Activated naive CD4-positive, alpha-beta T cell treated with anti-CD3 and anti-CD28 coated beads for 36 hours (primary cell): ENCODE measurements at regions of chrX and their contacts with region 1.

Region 1: DNA sequence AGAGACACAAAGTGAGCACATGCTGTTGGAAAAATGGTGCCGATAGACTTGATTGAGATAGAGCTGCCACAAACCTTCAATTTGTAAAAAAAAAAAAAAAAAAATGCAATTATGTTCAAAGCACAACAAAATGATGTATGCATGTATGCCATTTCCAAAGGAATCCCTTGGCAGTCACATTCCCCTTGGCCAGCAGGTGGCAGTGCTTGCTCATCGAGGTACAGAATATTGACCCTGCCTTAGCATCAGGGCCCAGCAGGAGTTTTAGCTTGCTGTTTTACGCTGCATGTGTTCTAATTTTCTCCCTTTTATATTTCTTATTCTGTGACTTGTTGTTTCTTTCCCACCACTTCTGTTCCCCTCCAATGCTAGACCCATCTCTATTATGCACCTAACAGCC is 34.5 kb upstream of the CYBB start:
- DNase-seq: peak; percentile 86
- H3K4me3 Mint-ChIP-seq: no peak overlapping the region
- H3K27ac Mint-ChIP-seq: peak overlapping the region; percentile 66
- H3K4me1 Mint-ChIP-seq: peaks cover 15% of the 10 kb centered on the region
- H3K27me3 Mint-ChIP-seq: no peaks in the 10 kb centered on the region

Region 2: GRCh38 chrX:37627602-37628001 is 117.8 kb before region 1 on chrX:
- CTCF ChIA-PET with region 1: no interaction called
- intact Hi-C with region 1: no loop called
- DNase-seq: no peak
- H3K4me3 Mint-ChIP-seq: no peak overlapping the region
- H3K27ac Mint-ChIP-seq: no peak overlapping the region
- H3K4me1 Mint-ChIP-seq: no peaks in the 10 kb centered on the region
- H3K27me3 Mint-ChIP-seq: peaks cover 3% of the 10 kb centered on the region

Region 3: GRCh38 chrX:37722595-37722994 is 22.8 kb before region 1 on chrX:
- CTCF ChIA-PET with region 1: no interaction called
- intact Hi-C with region 1: no loop called
- DNase-seq: no peak
- H3K4me3 Mint-ChIP-seq: no peak overlapping the region
- H3K27ac Mint-ChIP-seq: no peak overlapping the region
- H3K4me1 Mint-ChIP-seq: no peaks in the 10 kb centered on the region
- H3K27me3 Mint-ChIP-seq: peaks cover 3% of the 10 kb centered on the region

Region 4: GRCh38 chrX:37776283-37776986 is 31.1 kb after region 1 on chrX:
- CTCF ChIA-PET with region 1: interaction called, 3 read pairs
- intact Hi-C with region 1: loop called (anchors 2 kb)
- DNase-seq: peak; percentile 27
- H3K4me3 Mint-ChIP-seq: no peak overlapping the region
- H3K27ac Mint-ChIP-seq: no peak overlapping the region
- H3K4me1 Mint-ChIP-seq: peaks cover 20% of the 10 kb centered on the region
- H3K27me3 Mint-ChIP-seq: no peaks in the 10 kb centered on the region

Region 5: DNA sequence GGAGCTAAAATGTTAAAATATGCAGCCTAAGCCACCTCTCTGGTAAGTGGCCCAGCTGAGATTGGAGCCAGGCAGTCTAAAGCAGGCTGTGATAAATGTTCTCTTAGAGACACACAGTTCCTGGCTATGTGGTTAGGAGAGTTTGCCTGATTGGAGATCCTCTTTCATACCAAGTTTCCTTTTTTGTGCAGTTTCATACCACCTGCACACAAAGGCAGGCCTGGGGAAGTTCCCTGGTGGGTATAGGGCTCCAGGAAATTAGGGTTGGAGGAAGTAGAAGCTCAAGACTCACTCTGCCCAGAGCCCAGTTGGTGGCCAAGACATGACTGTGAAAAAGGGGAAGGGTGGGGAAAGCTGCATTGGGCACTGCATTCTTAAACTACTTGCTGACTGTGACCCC is 51.5 kb after region 1 on chrX:
- CTCF ChIA-PET with region 1: no interaction called
- intact Hi-C with region 1: loop called (anchors 2 kb)
- DNase-seq: peak; percentile 14
- H3K4me3 Mint-ChIP-seq: no peak overlapping the region
- H3K27ac Mint-ChIP-seq: no peak overlapping the region
- H3K4me1 Mint-ChIP-seq: peaks cover 18% of the 10 kb centered on the region
- H3K27me3 Mint-ChIP-seq: no peaks in the 10 kb centered on the region

Region 6: DNA sequence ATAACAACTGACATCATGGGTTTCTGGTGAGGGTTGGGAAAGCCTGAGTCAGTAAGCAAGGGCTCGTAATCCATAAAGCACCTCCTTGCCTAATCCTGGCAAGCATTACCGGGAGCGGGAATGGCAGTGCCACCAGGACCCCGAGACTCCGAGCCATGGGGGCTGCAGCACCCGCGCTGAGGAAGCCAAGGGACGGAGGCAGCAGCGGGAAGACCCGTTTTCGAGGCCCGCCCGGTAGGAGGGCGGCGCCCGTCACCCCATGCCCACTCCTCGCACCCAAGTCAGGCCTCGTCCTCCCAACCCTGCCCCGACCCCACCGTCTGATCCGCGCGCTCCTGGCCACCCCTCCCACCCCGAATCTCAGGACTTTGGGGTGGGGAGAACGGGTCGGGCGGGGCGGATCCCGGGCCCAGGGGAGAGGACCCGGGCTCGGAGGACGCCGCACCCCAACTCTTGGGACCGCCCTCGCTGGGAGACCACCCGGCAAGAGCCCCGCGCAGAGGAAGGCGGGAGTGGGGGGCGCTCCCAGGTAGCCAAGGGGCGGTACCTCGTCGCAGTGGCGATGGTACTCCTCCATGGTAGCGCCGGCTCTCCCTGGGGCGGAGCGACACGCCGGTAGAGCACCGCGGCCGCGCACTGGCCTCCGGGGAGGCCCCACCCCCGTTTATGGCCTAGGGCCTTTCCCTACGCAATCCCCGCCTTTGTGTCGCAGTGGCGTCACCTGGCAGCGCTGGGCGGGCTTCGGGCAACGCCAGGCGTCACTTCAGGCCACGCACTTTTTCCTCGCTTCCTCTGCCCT is 101.8 kb after region 1 on chrX and contains the start of gene DYNLT3:
- CTCF ChIA-PET with region 1: interaction called, 11 read pairs
- intact Hi-C with region 1: loop called (anchors 1 kb)
- DNase-seq: peak; percentile 83
- H3K4me3 Mint-ChIP-seq: peak within 1 kb of the TSS; percentile 72
- H3K27ac Mint-ChIP-seq: peak within 1 kb of the TSS; percentile 81
- H3K4me1 Mint-ChIP-seq: peaks cover 19% of the 10 kb centered on the region
- H3K27me3 Mint-ChIP-seq: no peaks in the 10 kb centered on the region
- total RNA-seq, gene DYNLT3: 11.8 to 14.4 TPM

Region 7: GRCh38 chrX:38080808-38081207 is 335.5 kb after region 1 on chrX:
- CTCF ChIA-PET with region 1: no interaction called
- intact Hi-C with region 1: no loop called
- DNase-seq: no peak
- H3K4me3 Mint-ChIP-seq: no peak overlapping the region
- H3K27ac Mint-ChIP-seq: no peak overlapping the region
- H3K4me1 Mint-ChIP-seq: no peaks in the 10 kb centered on the region
- H3K27me3 Mint-ChIP-seq: no peaks in the 10 kb centered on the region

Region 8: GRCh38 chrX:38166478-38167083 is 421.2 kb after region 1 on chrX:
- CTCF ChIA-PET with region 1: interaction called, 3 read pairs
- intact Hi-C with region 1: loop called (anchors 5 kb)
- DNase-seq: peak; percentile 27
- H3K4me3 Mint-ChIP-seq: no peak overlapping the region
- H3K27ac Mint-ChIP-seq: no peak overlapping the region
- H3K4me1 Mint-ChIP-seq: no peaks in the 10 kb centered on the region
- H3K27me3 Mint-ChIP-seq: no peaks in the 10 kb centered on the region